ENCODE measurements at regions of chr3 and their contacts with region 1.

Region 1: GRCh38 chr3:158659454-158660237 is 12.8 kb downstream of the LXN start:
- DNase-seq: peak; percentile 60 to 73
- ATAC-seq: peak; percentile 87 to 89
- H3K4me3 ChIP-seq: no peak overlapping the region
- H3K27ac ChIP-seq: peak overlapping the region in 1 of 2 experiments; percentile 31; a peak in 1 of 6 replicates
- H3K4me1 ChIP-seq: peaks cover 28% of the 10 kb centered on the region
- CTCF ChIP-seq: peak; percentile 68
- EP300 ChIP-seq: no peak
- POLR2A ChIP-seq: no peak
- RAD21 ChIP-seq: peak; percentile 56

Region 2: DNA sequence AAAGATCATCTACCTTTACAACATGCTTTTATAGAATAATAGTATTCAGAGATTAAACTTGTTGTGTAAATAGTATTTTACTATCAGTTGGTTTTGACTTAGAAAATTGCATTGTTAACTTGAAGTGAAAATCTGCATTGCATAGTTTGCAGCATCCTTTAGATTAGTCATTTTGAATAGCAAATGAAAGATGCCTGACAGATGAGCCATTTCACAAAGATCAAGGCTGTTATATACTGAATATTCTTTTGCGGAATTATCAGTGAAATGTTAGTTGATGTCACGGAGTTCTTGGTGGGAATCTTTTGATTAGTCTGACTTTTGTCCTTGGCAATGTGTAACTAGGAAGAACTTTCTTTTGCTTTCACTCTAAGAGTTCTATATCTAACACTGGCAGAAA is 525.3 kb before region 1 on chr3:
- CTCF ChIA-PET with region 1: no interaction called
- POLR2A ChIA-PET with region 1: no interaction called
- DNase-seq: no peak
- ATAC-seq: no peak
- H3K4me3 ChIP-seq: no peak overlapping the region
- H3K27ac ChIP-seq: no peak overlapping the region
- H3K4me1 ChIP-seq: no peaks in the 10 kb centered on the region
- CTCF ChIP-seq: no peak
- EP300 ChIP-seq: no peak
- POLR2A ChIP-seq: no peak
- RAD21 ChIP-seq: no peak

Region 3: DNA sequence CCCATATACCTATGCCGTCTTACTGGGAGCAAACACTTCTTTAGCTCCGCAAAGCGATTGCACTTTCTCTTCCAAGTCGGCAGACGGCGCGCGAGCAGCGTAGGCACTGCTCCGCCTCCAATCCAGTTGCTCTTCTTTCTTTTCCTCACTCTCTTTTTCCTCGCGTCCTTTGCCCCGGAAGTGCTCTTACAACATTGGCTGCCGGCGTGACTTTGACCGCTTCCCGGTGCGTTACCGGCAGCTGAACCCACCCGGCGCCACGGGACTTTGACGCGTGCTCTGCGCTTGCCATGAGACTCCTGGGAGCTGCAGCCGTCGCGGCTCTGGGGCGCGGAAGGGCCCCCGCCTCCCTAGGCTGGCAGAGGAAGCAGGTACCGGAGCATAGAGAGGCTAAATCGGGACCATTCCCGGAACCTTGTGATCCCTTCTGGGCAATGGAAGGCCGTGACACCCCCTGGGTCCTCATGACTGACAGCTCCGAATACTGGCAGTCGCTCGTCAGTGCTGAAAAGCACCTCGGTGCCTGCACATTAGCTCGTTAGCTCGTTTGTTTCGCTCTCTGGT is 15.2 kb before region 1 on chr3 and contains the start of gene GFM1:
- CTCF ChIA-PET with region 1: interaction called, 23 read pairs
- POLR2A ChIA-PET with region 1: interaction called, 6 read pairs
- DNase-seq: peak; percentile 82 to 97
- ATAC-seq: peak; percentile 98 to 100
- H3K4me3 ChIP-seq: peak within 1 kb of the TSS; percentile 72
- H3K27ac ChIP-seq: peak within 1 kb of the TSS; percentile 87 to 99
- H3K4me1 ChIP-seq: peaks cover 14% of the 10 kb centered on the region
- CTCF ChIP-seq: peak; percentile 94
- EP300 ChIP-seq: no peak
- POLR2A ChIP-seq: peak; percentile 57; the same call in 1 of the 2 replicates
- RAD21 ChIP-seq: peak; percentile 49 to 53
- polyA plus RNA-seq, gene GFM1: 54.5 and 71.4 TPM in 2 replicates

Region 4: GRCh38 chr3:158672293-158673176 is 12.9 kb after region 1 on chr3 and contains the start of gene LXN:
- CTCF ChIA-PET with region 1: interaction called, 27 read pairs
- POLR2A ChIA-PET with region 1: interaction called, 4 read pairs
- DNase-seq: peak; percentile 89 to 96
- ATAC-seq: peak; percentile 100
- H3K4me3 ChIP-seq: peak within 1 kb of the TSS; percentile 58
- H3K27ac ChIP-seq: peak within 1 kb of the TSS; percentile 82 to 90
- H3K4me1 ChIP-seq: peaks cover 18% of the 10 kb centered on the region
- CTCF ChIP-seq: peak; percentile 66
- EP300 ChIP-seq: no peak
- POLR2A ChIP-seq: peak; percentile 64
- RAD21 ChIP-seq: peak; percentile 60 to 61; a peak in 4 of 5 replicates
- polyA plus RNA-seq, gene LXN: 131 and 135 TPM in 2 replicates

Region 5: DNA sequence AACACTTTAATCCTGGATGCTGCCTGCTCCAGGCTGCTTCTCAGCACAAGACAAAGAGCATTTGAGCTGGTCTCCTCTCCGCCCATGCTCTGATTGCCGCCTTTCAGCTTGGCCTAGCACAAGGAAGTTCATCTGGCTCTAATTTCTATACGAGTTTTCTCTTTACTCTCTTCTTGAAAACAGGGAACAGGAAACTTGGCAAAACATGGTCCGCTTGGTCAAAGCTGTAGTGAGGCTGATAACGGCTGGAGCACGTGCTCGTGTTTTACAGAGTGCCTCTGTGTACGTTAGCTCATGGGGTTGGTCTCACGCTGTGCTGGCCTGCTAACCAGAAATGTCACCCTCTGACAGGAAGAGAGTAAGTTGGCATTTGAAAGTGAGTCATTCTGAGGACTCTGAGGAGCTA is 53.5 kb after region 1 on chr3:
- CTCF ChIA-PET with region 1: interaction called, 17 read pairs
- POLR2A ChIA-PET with region 1: no interaction called
- DNase-seq: no peak
- ATAC-seq: no peak
- H3K4me3 ChIP-seq: no peak overlapping the region
- H3K27ac ChIP-seq: peak overlapping the region in 1 of 2 experiments; percentile 74; a peak in 3 of 6 replicates
- H3K4me1 ChIP-seq: peaks cover 72% of the 10 kb centered on the region
- CTCF ChIP-seq: no peak
- EP300 ChIP-seq: no peak
- POLR2A ChIP-seq: no peak
- RAD21 ChIP-seq: no peak

Region 6: GRCh38 chr3:158722108-158722507 is 62.5 kb after region 1 on chr3:
- CTCF ChIA-PET with region 1: interaction called, 21 read pairs
- POLR2A ChIA-PET with region 1: no interaction called
- DNase-seq: no peak
- ATAC-seq: no peak
- H3K4me3 ChIP-seq: no peak overlapping the region
- H3K27ac ChIP-seq: peak overlapping the region; percentile 80 to 90
- H3K4me1 ChIP-seq: peaks cover 97% of the 10 kb centered on the region
- CTCF ChIP-seq: no peak
- EP300 ChIP-seq: no peak
- POLR2A ChIP-seq: no peak
- RAD21 ChIP-seq: no peak

Region 7: DNA sequence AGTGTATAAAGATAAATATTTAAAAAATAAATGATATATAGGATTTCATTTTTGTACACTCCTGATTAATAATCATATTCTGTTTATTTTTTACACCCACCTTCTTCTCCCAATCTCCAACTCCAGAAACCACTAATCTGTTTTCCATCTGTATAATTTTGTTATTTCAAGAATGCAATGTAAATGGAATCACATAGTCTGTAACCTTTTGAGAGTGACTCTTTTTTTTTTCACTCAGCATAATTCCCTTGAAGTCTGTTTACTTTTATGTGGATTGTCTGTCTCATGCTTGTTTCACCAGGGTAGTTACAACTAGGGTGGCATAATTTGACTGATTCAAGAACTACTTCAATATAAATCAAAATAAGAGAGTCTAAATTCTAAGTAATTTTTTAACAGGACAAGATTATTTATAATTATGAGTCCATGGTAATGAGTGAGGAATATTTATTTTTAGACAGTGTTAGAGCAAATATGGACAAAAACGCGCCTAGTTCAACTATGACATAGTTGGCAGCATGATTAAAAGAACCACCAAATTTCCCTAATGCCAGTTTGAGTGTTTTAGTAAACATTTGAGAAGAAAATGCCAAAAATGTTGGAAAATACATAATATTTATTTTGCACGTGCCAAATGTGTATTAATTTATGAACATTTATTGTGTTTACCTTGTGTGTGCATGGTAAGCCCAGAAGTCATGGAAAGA is 122.8 kb after region 1 on chr3:
- CTCF ChIA-PET with region 1: interaction called, 11 read pairs
- POLR2A ChIA-PET with region 1: no interaction called
- DNase-seq: no peak
- ATAC-seq: no peak
- H3K4me3 ChIP-seq: no peak overlapping the region
- H3K27ac ChIP-seq: peak overlapping the region; percentile 33 to 58; a peak in 4 of 6 replicates
- H3K4me1 ChIP-seq: peaks cover 16% of the 10 kb centered on the region
- CTCF ChIP-seq: no peak
- EP300 ChIP-seq: no peak
- POLR2A ChIP-seq: no peak
- RAD21 ChIP-seq: no peak